ENCODE measurements at regions of chr10 and their contacts with region 1.

Region 1: GRCh38 chr10:73159038-73159648 is 8.7 kb downstream of the ECD start:
- DNase-seq: peak; percentile 67
- H3K4me3 Mint-ChIP-seq: no peak overlapping the region
- H3K27ac Mint-ChIP-seq: no peak overlapping the region
- H3K4me1 Mint-ChIP-seq: peaks cover 9% of the 10 kb centered on the region
- H3K27me3 Mint-ChIP-seq: no peaks in the 10 kb centered on the region
- CTCF ChIP-seq: peak; percentile 61

Region 2: GRCh38 chr10:73096449-73097304 is 62.5 kb before region 1 on chr10 and contains the start of gene P4HA1:
- CTCF ChIA-PET with region 1: interaction called, 6 read pairs
- intact Hi-C with region 1: loop called (anchors 2 kb)
- DNase-seq: peak; percentile 98
- H3K4me3 Mint-ChIP-seq: peak within 1 kb of the TSS; percentile 95
- H3K27ac Mint-ChIP-seq: peak within 1 kb of the TSS; percentile 96
- H3K4me1 Mint-ChIP-seq: no peaks in the 10 kb centered on the region
- H3K27me3 Mint-ChIP-seq: no peaks in the 10 kb centered on the region
- CTCF ChIP-seq: peak; percentile 80
- total RNA-seq, gene P4HA1: 20.3 and 20.9 TPM in 2 replicates